PC-3 (cell line): ENCODE measurements at regions of chr4 and their contacts with region 1.

Region 1: DNA sequence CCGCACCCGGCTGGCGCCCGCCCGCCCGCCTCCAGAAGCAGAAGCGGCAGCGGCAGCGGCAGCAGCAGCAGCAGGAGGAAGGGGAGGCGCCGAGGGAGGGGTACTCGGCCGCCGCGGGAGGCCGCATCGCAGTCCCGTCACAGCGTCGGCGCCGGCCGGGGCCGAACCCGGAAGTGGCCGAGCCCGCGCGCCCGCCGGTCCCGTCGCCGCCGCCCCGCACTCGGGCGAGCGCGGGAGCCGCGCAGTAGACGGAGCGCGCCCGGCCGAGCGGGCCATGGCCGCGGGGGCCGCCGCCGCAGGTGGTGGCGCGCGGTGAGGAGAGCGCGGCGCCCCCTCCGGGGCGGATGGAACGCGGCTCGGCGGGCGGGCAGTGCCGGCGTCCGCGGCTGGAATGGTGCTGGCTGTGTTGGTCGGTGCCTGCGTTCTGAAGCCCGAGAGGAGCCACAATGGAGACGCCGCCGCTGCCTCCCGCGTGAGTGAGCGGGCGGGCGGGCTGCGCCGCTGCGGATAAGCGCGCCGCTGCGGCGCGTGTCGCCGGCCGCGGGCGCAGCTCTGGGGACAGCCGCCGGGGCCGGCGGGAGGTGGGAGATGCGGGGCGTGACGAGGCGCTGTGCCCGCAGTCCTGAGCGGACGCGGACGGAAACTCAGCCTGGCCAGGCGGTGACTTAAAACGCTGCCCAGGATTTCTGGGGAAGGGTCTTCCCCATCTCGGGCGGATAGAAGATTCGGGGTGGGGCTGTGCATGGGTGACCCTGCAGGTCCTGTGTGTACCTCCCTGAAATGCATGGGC is at the start of gene KLHL2:
- DNase-seq: peak; percentile 65
- ATAC-seq: peak; percentile 62
- H3K4me3 ChIP-seq: peak within 1 kb of the TSS; percentile 95
- H3K27ac ChIP-seq: no peak within 1 kb of the TSS
- H3K4me1 ChIP-seq: peaks cover 61% of the 10 kb centered on the region
- H3K27me3 ChIP-seq: no peaks in the 10 kb centered on the region
- CTCF ChIP-seq: no peak
- total RNA-seq, gene KLHL2: 10.0 and 11.0 TPM in 2 replicates

Region 2: GRCh38 chr4:164892018-164892417 is 315.6 kb before region 1 on chr4:
- CTCF ChIA-PET with region 1: no interaction called
- POLR2A ChIA-PET with region 1: no interaction called
- intact Hi-C with region 1: no loop called
- DNase-seq: no peak
- ATAC-seq: no peak
- H3K4me3 ChIP-seq: no peak overlapping the region
- H3K27ac ChIP-seq: no peak overlapping the region
- H3K4me1 ChIP-seq: no peaks in the 10 kb centered on the region
- H3K27me3 ChIP-seq: peaks cover 55% of the 10 kb centered on the region
- CTCF ChIP-seq: no peak

Region 3: GRCh38 chr4:165312506-165312905 is 104.9 kb after region 1 on chr4:
- CTCF ChIA-PET with region 1: no interaction called
- POLR2A ChIA-PET with region 1: no interaction called
- intact Hi-C with region 1: loop called (anchors 5 kb)
- DNase-seq: peak; percentile 68
- ATAC-seq: peak; percentile 84
- H3K4me3 ChIP-seq: no peak overlapping the region
- H3K27ac ChIP-seq: no peak overlapping the region
- H3K4me1 ChIP-seq: peaks cover 25% of the 10 kb centered on the region
- H3K27me3 ChIP-seq: no peaks in the 10 kb centered on the region
- CTCF ChIP-seq: no peak

Region 4: GRCh38 chr4:165343353-165344191 is 135.9 kb after region 1 on chr4:
- CTCF ChIA-PET with region 1: no interaction called
- POLR2A ChIA-PET with region 1: no interaction called
- intact Hi-C with region 1: loop called (anchors 5 kb)
- DNase-seq: peak; percentile 55
- ATAC-seq: peak; percentile 63
- H3K4me3 ChIP-seq: no peak overlapping the region
- H3K27ac ChIP-seq: no peak overlapping the region
- H3K4me1 ChIP-seq: no peaks in the 10 kb centered on the region
- H3K27me3 ChIP-seq: no peaks in the 10 kb centered on the region
- CTCF ChIP-seq: peak; percentile 70